Right ventricle myocardium inferior (tissue), 1 donor: ENCODE measurements at regions of chr2 and their contacts with region 1.

Region 1: GRCh38 chr2:119598596-119599263 is 54.5 kb downstream of the CFAP221 start:
- DNase-seq: no peak
- ATAC-seq: peak; percentile 75

Region 2: DNA sequence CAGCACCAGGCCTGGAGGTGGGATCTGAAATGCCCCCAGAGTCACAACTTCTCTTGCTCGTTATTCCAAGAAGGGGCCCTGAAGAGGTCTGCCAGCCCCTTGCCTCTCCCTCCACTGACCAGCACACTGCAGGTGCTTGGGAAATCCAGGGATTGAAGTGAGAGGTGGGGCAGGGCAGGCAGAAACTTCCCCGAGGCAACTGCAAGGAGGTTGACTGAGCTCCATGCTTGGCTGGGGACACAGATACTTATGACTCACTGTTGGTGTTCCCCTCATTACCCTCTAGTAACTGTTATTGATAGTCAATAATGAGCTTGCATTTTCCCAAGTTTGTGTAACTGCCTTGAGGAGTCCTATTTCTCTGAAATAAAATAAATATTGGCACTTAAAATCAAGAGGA is 609.2 kb before region 1 on chr2:
- intact Hi-C with region 1: no loop called
- DNase-seq: no peak
- ATAC-seq: no peak

Region 3: GRCh38 chr2:119487434-119488244 is 111.1 kb before region 1 on chr2:
- intact Hi-C with region 1: loop called (anchors 5 kb)
- DNase-seq: no peak
- ATAC-seq: no peak

Region 4: GRCh38 chr2:119565481-119565880 is 33.2 kb before region 1 on chr2:
- intact Hi-C with region 1: no loop called
- DNase-seq: no peak
- ATAC-seq: no peak

Region 5: DNA sequence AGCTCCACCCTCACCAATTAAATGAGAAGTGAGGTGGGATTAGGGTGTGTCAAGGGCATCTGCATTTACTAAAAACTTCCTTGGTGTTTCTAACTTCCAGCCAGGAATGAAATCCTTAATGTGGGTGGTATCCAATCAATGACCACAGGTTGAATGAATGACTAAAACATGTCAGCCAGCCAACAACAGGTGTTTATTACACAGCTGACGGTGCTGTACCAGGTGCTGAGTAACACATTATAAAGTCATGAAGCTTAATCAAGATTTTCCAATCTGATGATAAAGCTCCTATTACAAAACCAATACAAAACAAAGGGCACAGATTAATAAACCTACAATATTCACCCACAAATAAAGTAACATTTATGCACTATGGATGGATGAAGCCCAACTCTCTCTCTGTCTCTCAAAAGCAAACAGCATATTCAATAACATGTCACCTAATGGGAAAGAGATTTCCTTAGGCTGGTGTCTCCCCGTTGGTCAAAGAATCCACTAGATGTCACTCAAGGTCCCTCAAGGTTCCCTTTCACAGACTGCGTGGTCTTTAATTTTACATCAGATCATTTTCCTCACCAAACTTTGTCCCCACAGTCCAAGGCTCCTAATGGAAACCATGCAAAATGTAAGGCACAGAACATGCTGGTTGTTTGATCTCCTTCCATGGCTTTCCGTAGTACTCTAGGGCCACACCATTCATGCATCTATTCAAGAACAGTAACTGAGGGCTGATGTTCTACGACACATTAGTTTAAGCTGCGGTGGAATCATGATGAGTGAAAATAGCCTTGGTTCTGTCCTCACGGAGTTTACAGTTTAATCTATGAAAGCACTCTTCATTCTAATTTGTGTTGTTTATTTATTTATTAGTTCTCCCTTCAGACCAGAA is 154.6 kb after region 1 on chr2:
- intact Hi-C with region 1: no loop called
- DNase-seq: no peak
- ATAC-seq: peak; percentile 63